ENCODE measurements at regions of chr12 and their contacts with region 1.

Region 1: GRCh38 chr12:45728630-45729232 is 775 bp upstream of the ARID2 start:
- DNase-seq: peak; percentile 97
- H3K4me3 Mint-ChIP-seq: peak overlapping the region; percentile 95
- H3K27ac Mint-ChIP-seq: peak overlapping the region; percentile 99
- H3K4me1 Mint-ChIP-seq: peaks cover 17% of the 10 kb centered on the region
- H3K27me3 Mint-ChIP-seq: no peaks in the 10 kb centered on the region

Region 2: DNA sequence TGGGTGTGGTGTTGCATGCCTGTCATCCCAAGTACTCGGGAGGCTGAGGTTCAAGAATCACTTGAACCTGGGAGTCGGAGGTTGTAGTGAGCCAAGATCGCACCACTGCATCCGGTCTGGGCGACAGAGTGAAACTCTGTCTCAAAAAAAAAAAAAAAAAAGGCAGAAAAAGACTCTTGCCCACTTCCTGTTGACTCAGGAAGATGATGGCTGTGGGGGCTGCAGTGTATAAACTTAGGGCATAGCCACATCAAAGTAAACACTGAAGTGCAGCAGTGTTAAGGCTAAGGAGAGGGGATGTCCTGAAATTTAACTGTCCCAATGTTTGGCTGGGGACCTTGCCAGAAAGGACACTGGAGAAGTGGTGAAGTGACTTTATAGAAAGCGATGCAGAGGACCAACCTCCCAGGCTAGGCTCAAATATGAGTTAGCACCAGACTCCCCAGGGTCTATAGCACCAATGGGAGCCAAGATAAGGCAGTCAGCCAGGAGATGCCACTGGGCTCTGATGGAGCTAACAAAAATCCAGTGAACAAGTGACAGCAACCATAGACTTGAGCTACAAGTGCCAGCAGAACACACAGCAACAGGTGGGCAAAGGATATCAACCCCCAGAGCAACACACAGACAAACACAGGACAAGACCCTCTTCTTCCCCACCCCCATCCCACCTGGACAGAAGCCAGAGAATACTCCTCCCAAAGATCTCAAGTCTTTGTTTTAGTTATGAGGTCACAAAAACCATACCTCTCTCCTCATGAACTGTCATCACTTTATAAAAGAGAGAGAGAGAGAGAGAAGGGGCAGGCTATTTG is 880.6 kb before region 1 on chr12:
- CTCF ChIA-PET with region 1: no interaction called
- POLR2A ChIA-PET with region 1: no interaction called
- intact Hi-C with region 1: loop called (anchors 10 kb)
- DNase-seq: peak; percentile 81
- H3K4me3 Mint-ChIP-seq: peak overlapping the region; percentile 69
- H3K27ac Mint-ChIP-seq: peak overlapping the region; percentile 94
- H3K4me1 Mint-ChIP-seq: peaks cover 79% of the 10 kb centered on the region
- H3K27me3 Mint-ChIP-seq: no peaks in the 10 kb centered on the region

Region 3: GRCh38 chr12:45234139-45234846 is 494.4 kb before region 1 on chr12:
- CTCF ChIA-PET with region 1: no interaction called
- POLR2A ChIA-PET with region 1: no interaction called
- intact Hi-C with region 1: loop called (anchors 5 kb)
- DNase-seq: peak; percentile 22
- H3K4me3 Mint-ChIP-seq: peak overlapping the region; percentile 16
- H3K27ac Mint-ChIP-seq: peak overlapping the region; percentile 79
- H3K4me1 Mint-ChIP-seq: peaks cover 62% of the 10 kb centered on the region
- H3K27me3 Mint-ChIP-seq: no peaks in the 10 kb centered on the region

Region 4: GRCh38 chr12:45582986-45583659 is 145.6 kb before region 1 on chr12:
- CTCF ChIA-PET with region 1: no interaction called
- POLR2A ChIA-PET with region 1: no interaction called
- intact Hi-C with region 1: loop called (anchors 5 kb)
- DNase-seq: no peak
- H3K4me3 Mint-ChIP-seq: no peak overlapping the region
- H3K27ac Mint-ChIP-seq: no peak overlapping the region
- H3K4me1 Mint-ChIP-seq: no peaks in the 10 kb centered on the region
- H3K27me3 Mint-ChIP-seq: peaks cover 4% of the 10 kb centered on the region

Region 5: DNA sequence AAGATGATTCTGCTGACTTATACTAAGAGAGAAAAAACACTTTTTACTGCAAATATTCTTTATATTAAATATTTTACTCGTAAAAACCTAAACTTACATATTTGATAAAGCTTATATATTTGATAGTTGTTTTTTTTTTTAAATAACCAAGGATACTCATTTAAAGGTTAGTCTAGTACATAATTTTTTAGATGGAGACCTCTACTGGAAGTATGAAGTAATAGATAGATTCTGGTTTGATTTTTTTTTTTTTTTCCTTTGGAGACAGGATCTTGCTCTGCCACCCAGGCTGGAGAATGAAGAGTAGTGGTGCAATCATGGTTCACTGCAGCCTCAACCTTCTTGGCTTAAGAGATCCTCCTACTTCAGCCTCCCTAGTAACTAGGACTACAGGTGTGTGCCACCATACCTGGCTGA is 17.1 kb after region 1 on chr12:
- CTCF ChIA-PET with region 1: interaction called, 6 read pairs
- POLR2A ChIA-PET with region 1: interaction called, 7 read pairs
- intact Hi-C with region 1: loop called (anchors 2 kb)
- DNase-seq: no peak
- H3K4me3 Mint-ChIP-seq: no peak overlapping the region
- H3K27ac Mint-ChIP-seq: no peak overlapping the region
- H3K4me1 Mint-ChIP-seq: peaks cover 40% of the 10 kb centered on the region
- H3K27me3 Mint-ChIP-seq: no peaks in the 10 kb centered on the region

Region 6: DNA sequence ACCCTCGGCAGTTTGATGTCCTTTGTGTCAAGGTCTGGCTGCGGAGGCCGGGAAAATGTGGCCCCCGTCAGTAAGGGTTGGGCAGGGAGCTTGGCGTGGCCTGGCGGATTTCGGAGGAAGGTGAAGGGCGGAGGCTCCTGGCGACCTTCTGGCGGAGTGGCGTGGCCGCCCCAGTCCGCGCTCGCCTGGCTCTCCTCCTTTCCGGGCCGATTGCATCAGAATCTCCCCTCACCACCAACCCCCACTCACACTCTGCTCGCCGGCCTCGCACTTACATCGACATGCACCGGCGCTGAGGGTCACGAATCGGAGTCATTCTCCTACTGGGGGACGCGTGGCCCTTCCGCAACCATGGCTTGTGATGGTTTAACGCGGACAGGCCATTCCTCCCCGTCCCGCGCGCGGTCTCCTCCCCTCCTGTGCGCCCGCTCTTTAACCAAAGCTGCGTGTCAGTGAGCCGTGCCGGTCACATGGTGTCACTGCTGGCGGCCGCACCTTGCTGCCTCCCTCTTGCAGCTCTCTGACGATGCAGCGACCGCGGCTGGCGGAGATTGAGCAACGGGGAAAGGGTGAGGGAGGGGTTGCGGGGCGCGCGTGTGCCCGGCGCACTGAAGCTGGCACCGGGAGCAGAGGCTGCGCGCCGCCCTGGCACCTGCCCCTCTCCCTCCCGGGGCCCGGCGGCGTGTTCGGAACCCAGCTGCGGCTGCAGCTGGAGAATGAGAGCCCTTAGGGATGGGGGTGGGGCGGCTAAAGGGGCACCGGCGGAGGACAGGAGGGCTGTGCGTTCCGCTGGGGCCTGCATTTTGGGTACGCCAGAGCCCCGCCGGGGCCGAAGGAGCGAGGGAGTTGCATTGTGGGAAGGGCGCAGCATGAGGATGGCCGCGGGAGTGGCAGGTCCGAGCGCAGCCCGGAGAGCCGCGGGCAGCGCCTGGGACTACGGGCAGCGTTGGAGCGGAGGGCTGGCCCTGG is 540.1 kb after region 1 on chr12 and contains the start of gene SLC38A1:
- CTCF ChIA-PET with region 1: no interaction called
- POLR2A ChIA-PET with region 1: interaction called, 5 read pairs
- intact Hi-C with region 1: loop called (anchors 2 kb)
- DNase-seq: peak; percentile 92
- H3K4me3 Mint-ChIP-seq: no peak within 1 kb of the TSS
- H3K27ac Mint-ChIP-seq: no peak within 1 kb of the TSS
- H3K4me1 Mint-ChIP-seq: peaks cover 23% of the 10 kb centered on the region
- H3K27me3 Mint-ChIP-seq: no peaks in the 10 kb centered on the region
- total RNA-seq, gene SLC38A1: 142 TPM

Measured in activated CD4-positive, alpha-beta memory T cell treated with anti-CD3 and anti-CD28 coated beads for 36 hours (primary cell).